Endothelial cell of umbilical vein (primary cell): ENCODE measurements at regions of chr7 and their contacts with region 1.

Region 1: GRCh38 chr7:151599401-151600227 is 79.9 kb upstream of the RHEB start:
- DNase-seq: peak; percentile 85
- H3K4me3 ChIP-seq: peak overlapping the region in 1 of 3 experiments; percentile 14
- H3K27ac ChIP-seq: peak overlapping the region; percentile 88
- H3K4me1 ChIP-seq: peaks cover 42% of the 10 kb centered on the region
- H3K27me3 ChIP-seq: no peaks in the 10 kb centered on the region
- CTCF ChIP-seq: no peak
- POLR2A ChIP-seq: no peak

Region 2: DNA sequence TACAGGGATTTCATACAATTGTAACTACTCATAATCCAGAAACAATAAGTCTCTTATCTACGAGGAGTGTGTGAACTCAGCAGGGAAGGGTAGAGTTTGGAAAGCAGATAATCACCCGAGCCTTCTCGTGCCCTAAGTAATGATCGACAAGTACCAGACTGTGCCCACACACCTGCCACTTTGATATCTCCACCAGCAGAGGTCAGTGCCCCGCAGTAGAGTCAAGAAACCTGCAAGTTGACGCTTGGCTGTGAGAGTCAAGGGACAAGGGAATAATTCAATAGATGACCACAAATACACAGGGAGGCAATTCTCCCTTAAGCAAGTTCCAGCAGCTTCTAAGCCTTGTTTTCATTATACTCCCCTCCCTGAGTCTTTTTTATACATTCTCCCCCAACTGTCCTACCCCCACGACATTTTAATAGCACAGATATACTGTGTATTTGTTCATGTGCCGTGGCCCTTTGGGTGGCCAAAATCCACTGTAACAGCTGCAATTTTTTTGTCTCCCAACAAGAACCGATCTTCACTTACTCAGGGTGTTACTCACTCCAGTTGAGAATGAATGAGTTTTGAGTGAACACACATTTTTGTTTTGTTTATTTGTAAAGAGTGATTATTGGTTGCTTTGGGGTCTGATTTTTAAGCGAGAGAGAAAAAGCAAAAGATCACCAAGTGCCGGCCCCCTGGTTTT is 27.0 kb after region 1 on chr7:
- CTCF ChIA-PET with region 1: interaction called, 13 read pairs
- POLR2A ChIA-PET with region 1: no interaction called
- dilution Hi-C with region 1: no loop called
- intact Hi-C with region 1: loop called (anchors 2 kb)
- DNase-seq: no peak
- H3K4me3 ChIP-seq: no peak overlapping the region
- H3K27ac ChIP-seq: no peak overlapping the region
- H3K4me1 ChIP-seq: peaks cover 49% of the 10 kb centered on the region
- H3K27me3 ChIP-seq: no peaks in the 10 kb centered on the region
- CTCF ChIP-seq: peak; percentile 16 to 34
- POLR2A ChIP-seq: no peak